ENCODE measurements at regions of chr9 and their contacts with region 1.

Region 1: GRCh38 chr9:131334629-131335367 is 45.3 kb downstream of the PLPP7 start:
- DNase-seq: no peak
- H3K4me3 ChIP-seq: no peak overlapping the region
- H3K27ac ChIP-seq: no peak overlapping the region
- H3K4me1 ChIP-seq: peaks cover 0 to 6% (median 0%) of the 10 kb centered on the region in 3 donors
- H3K27me3 ChIP-seq: peaks cover 0 to 3% (median 0%) of the 10 kb centered on the region in 4 donors
- CTCF ChIP-seq: no peak
- POLR2A ChIP-seq: no peak

Region 2: DNA sequence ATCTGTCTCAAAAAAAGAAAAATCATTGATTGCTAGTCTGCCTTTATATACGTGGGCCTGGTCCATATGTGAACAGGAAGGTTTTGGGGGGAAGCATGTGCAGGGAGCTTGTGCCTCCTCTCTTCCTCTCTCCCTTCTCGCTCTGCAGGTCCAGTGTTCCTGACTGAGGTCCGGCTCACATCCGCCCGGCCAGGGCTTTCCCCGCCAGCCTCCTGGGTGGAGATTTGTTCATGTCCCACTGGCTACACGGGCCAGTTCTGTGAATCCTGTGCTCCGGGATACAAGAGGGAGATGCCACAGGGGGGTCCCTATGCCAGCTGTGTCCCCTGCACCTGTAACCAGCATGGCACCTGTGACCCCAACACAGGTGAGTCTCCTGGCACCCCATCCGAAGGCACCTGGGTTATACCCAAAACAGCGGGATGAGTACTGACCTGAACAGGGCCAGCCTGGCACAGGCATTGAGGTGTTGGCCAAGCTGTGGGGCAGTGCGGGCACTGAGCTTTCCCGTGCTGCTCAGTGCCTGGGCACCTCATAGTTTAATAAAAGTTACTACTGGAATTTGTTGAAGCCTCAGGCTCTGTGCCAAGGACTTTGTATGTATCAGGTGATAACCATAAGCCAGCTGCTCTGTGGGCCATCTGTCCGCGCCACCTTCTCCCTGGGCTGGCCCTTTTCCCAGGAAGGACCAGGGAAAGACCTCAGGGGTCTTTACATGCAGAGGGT is 277.9 kb before region 1 on chr9:
- intact Hi-C with region 1: loop called (anchors 5 kb)
- DNase-seq: no peak
- H3K4me3 ChIP-seq: no peak overlapping the region
- H3K27ac ChIP-seq: no peak overlapping the region
- H3K4me1 ChIP-seq: no peaks in the 10 kb centered on the region
- H3K27me3 ChIP-seq: peaks cover 0 to 23% (median 0%) of the 10 kb centered on the region in 4 donors
- CTCF ChIP-seq: no peak
- POLR2A ChIP-seq: no peak

Region 3: DNA sequence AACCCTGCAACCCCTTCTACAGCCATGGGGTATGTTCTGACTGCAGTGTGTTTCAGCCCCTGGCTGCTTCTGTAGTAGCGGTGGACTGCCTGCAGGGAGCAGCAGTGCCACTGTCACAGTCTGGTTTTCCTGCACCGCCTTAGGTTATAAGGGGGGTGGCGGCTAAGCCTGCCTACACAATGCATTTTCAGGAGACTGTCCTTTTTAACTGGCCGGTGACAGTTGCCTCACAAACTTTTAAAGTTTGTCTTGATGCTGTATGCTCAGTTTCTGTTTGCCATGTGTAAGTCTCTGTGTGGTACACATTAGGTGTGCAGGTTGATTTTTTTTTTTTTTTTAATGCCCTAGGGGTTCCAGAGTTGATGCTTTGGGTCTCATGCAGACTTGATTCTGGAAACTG is 156.4 kb before region 1 on chr9:
- intact Hi-C with region 1: loop called (anchors 5 kb)
- DNase-seq: peak; percentile 7
- H3K4me3 ChIP-seq: no peak overlapping the region
- H3K27ac ChIP-seq: no peak overlapping the region
- H3K4me1 ChIP-seq: no peaks in the 10 kb centered on the region
- H3K27me3 ChIP-seq: no peaks in the 10 kb centered on the region
- CTCF ChIP-seq: peak; percentile 80 to 94 (median 86)
- POLR2A ChIP-seq: no peak

Measured in esophagus squamous epithelium (tissue), 5 donors.